ENCODE measurements at regions of chr1 and their contacts with region 1.

Region 1: GRCh38 chr1:65075123-65075976 is 72.7 kb upstream of the AK4 start:
- DNase-seq: no peak
- ATAC-seq: peak; percentile 94
- H3K4me3 Mint-ChIP-seq: no peak overlapping the region
- H3K27ac Mint-ChIP-seq: no peak overlapping the region
- H3K4me1 Mint-ChIP-seq: no peaks in the 10 kb centered on the region
- H3K27me3 Mint-ChIP-seq: peaks cover 5% of the 10 kb centered on the region
- CTCF ChIP-seq: peak; percentile 51

Region 2: GRCh38 chr1:64744492-64745180 is 330.7 kb before region 1 on chr1 and contains the start of gene RAVER2:
- CTCF ChIA-PET with region 1: no interaction called
- POLR2A ChIA-PET with region 1: no interaction called
- intact Hi-C with region 1: loop called (anchors 1 kb)
- DNase-seq: peak; percentile 50
- ATAC-seq: peak; percentile 79
- H3K4me3 Mint-ChIP-seq: peak within 1 kb of the TSS; percentile 85
- H3K27ac Mint-ChIP-seq: peak within 1 kb of the TSS; percentile 18
- H3K4me1 Mint-ChIP-seq: peaks cover 20% of the 10 kb centered on the region
- H3K27me3 Mint-ChIP-seq: peaks cover 8% of the 10 kb centered on the region
- CTCF ChIP-seq: no peak
- total RNA-seq, gene RAVER2: 1.0 and 1.2 TPM in 2 replicates

Measured in activated B cell treated with CpG ODN at 0.5 μM for 24 hours (primary cell).